ENCODE measurements at regions of chr12 and their contacts with region 1.

Region 1: GRCh38 chr12:130031571-130032189 is 127.9 kb upstream of the TMEM132D start:
- DNase-seq: peak; percentile 68

Region 2: GRCh38 chr12:130300737-130301535 is 269.3 kb after region 1 on chr12:
- in situ Hi-C with region 1: loop called (anchors 25 kb)
- DNase-seq: no peak